ENCODE measurements at regions of chr19 and their contacts with region 1.

Region 1: DNA sequence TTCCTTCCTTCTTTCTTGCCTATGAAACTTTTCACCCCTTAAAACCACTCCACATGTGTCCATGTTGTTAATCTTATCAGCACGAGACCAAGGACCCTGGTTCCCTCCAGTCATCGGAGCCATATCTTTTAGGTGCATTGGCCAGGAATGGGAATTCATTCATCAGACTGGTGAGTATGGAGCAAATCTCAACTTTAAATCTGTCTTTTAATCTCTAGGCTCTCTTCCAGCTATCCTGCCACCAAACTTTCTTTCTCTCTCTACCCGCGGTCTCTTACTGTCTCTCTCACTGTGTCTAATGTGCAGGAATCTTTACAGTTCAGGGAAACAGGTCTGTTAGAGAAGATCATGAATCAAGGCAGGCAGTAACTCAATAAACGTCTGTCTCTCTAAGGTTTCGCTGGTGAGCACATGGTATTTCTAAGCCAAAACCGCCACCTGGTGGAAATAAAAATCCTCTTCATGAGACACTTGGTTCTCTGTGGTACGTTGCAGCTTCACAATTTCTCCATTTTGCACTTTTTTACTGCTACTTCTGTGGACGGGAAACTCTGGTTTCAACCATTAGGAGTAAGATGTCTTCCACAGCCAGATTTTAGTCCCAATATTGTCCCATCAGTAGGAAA is 16.1 kb downstream of the LGALS16 start:
- DNase-seq: peak; percentile 55

Region 2: DNA sequence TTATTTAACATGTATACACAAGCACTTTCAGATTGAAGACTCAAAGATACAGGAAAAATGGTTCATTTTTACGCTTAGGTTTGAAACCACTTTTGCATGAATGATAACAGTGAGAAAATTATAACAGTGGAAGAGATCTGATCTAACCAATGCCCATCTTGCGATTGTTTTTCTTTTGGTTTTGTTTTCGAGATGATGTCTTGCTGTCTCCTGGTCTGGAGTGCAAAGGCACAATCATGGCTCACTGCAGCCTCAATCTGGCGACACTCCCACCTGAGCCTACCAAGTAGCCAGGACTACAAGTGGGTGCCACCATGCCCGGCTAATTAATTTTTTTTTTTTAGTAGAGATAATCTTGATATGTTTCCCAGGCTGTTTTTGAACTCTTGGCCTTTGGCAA is 121.7 kb before region 1 on chr19:
- CTCF ChIA-PET with region 1: interaction called, 17 read pairs
- POLR2A ChIA-PET with region 1: no interaction called
- DNase-seq: no peak

Region 3: GRCh38 chr19:39603825-39604224 is 68.0 kb before region 1 on chr19:
- CTCF ChIA-PET with region 1: no interaction called
- POLR2A ChIA-PET with region 1: no interaction called
- DNase-seq: no peak

Region 4: GRCh38 chr19:39661565-39661964 is 10.3 kb before region 1 on chr19:
- CTCF ChIA-PET with region 1: no interaction called
- POLR2A ChIA-PET with region 1: no interaction called
- DNase-seq: no peak

Region 5: DNA sequence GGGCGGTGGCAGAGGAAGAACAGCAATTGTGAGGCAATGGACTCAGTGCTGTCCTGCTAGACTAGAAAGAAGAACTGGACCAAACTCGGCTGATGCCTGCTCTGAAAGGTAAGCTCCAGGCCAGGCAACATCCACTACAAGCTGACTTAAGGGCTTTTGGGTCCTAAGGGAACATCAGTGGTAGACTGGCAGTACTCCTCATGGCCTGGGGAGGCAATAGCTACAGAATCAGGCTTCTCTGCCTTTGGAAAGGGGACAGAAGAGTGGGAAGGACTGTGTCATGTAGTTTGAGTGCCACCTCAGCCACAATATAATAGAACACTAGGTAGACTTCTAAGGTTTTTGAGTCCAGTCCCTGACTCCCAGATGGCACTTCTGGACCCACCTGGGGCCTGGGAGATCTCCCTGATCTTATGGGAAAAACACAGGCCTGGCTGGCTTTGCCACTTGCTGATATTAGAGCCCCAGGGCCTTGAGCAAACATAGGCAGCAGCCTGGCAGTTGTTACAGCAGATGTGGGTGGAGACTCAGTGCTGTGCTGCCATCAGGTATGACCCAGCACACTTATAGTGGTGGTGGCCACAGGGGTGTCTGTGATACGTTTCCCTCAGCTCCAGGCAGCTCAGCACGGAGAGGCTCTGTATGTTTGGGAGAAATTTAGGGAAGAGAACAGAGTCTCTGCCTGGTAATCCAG is 75.1 kb after region 1 on chr19:
- CTCF ChIA-PET with region 1: no interaction called
- POLR2A ChIA-PET with region 1: no interaction called
- DNase-seq: no peak